ENCODE measurements at regions of chr16 and their contacts with region 1.

Region 1: DNA sequence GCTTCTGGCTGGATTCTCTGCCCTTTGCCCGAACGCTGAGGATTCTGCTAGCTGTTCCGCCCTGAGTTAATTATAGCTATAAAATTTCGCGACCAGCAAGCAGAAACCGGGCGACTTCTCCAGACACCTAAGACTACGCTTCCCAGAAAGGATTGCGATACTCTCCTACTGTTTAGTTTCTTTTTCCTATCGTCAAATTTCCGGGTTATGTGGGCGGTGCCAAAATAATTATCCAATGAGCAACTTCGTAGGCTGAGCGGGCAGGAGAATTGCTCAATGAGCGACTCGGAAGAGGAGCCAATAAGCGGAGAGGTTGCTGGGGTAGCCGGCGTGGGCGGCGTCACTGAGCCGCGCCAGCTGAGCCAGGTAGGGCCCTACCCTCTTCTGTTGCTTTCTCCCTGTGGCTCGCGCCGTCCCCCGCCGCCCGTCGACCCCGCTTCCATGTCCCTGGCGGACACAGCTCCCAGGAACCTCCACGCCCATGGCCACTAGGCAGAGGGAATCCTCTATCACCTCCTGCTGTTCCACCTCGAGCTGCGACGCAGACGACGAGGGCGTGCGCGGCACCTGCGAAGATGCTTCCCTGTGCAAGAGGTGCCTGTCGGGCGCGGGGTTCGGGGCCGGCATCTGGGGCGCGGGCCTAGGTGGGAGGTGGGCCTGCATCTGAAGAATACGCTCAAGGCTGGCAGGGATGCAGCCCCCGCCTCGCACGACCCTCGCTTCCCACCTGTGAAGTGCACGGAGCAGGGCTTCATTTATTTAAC is at the start of gene LCMT1:
- DNase-seq: peak; percentile 88 to 94
- ATAC-seq: peak; percentile 81 to 84 (median 84)
- H3K4me3 ChIP-seq: peak within 1 kb of the TSS; percentile 98
- H3K27ac ChIP-seq: peak within 1 kb of the TSS; percentile 86
- H3K4me1 ChIP-seq: peaks cover 31% of the 10 kb centered on the region
- H3K27me3 ChIP-seq: no peaks in the 10 kb centered on the region
- CTCF ChIP-seq: no peak
- total RNA-seq, gene LCMT1: 35.1 to 54.5 (median 38.0) TPM

Region 2: DNA sequence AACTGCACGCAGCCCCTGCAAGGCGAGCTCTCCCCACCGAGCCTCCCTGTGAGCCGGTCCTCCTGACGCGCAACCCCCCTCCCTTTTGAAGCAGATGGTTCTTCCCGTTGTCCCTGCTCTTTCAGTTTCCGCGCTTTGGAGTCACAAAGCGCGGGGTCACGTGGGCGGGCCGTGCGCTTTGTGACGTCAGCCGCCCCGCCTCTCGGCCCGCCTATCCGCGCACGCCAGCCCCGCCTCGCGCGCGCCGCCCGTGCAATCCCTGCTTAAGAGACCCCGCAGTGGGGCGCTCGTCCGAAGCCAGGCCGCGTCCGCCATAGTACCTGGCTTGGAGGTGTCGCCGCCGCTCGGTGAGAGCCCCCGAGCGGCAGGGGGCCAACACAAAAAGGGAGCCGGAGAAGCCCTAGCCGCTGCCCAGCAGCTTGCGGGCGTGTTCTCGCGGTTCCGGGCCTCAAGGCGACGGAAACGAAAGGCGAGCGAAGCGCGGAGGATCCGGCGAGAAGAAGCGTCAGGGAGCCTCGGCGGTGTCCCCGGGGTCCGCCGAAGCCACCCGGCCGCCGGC is 572.2 kb before region 1 on chr16 and contains the start of gene RBBP6:
- intact Hi-C with region 1: loop called in 1 of 2 experiments (anchors 10 kb)
- DNase-seq: peak; percentile 95 to 97
- ATAC-seq: peak; percentile 96 to 99 (median 98)
- H3K4me3 ChIP-seq: peak within 1 kb of the TSS; percentile 98
- H3K27ac ChIP-seq: peak within 1 kb of the TSS; percentile 100
- H3K4me1 ChIP-seq: peaks cover 12% of the 10 kb centered on the region
- H3K27me3 ChIP-seq: no peaks in the 10 kb centered on the region
- CTCF ChIP-seq: peak; percentile 27
- total RNA-seq, gene RBBP6: 21.8 to 30.7 (median 25.7) TPM

Region 3: DNA sequence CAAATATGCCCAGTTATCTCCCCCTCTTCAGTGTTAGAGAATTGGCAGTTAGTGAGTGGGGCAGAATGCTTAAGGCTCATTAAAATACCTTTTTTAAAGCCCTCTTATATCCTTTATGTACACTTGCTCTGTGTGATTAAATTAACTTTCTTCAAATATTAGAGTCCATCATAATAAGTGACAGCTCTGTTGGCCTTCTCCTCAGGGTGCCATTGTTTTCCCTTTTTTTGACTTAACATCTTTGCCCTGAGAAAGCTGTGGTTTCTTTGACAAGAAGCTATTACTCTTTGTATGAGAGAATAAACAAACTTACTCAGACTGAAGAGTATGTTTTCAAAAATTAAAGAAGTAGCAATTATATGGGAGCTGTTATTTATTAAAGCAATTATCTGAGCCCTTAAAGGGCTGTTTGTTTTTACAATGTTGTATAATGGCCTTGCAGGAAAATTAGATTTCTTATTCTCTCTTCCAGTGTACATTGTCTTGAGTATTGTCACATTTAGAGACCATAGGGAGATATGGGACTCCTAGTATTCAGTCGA is 558.8 kb before region 1 on chr16:
- intact Hi-C with region 1: loop called (anchors 10 kb)
- DNase-seq: no peak
- ATAC-seq: no peak
- H3K4me3 ChIP-seq: no peak overlapping the region
- H3K27ac ChIP-seq: no peak overlapping the region
- H3K4me1 ChIP-seq: no peaks in the 10 kb centered on the region
- H3K27me3 ChIP-seq: no peaks in the 10 kb centered on the region
- CTCF ChIP-seq: no peak

Region 4: DNA sequence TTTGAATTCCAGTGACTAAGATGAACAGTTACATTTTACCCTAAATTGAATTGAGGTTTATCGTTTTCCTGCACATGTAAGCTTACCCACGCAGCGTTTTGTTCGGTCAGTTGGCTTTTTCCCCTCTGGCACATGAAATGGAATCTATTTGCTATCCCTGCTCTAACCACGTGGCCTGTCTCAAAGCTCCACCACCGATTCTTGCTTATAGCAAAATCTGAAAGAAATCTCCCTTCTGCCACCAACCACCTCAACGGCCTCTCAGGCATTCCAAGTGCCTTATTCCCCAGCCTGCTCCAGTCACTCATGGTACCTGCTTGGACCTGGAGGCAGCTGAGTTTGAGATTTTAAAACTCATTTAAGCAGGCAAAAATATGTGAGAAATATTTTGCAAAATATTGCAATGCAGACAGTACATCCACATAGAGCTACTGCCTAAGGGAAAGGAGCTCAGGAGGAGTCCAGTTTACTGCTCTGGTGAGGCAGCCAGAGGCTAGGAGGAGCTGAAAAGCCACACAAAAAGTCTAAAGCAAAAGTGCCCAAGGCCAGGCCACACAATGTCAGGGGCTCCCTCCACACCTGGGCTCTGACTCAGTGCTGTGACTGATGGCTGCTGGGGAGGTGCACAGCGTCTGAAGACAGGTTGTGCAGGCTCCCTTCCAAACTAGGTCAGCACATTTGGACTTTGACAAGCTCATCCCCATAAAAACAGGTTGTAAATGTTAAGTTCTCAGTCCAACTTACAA is 122.8 kb before region 1 on chr16:
- intact Hi-C with region 1: loop called in 1 of 2 experiments (anchors 10 kb)
- DNase-seq: no peak
- ATAC-seq: peak; percentile 39 to 60 (median 48)
- H3K4me3 ChIP-seq: peak overlapping the region; percentile 32
- H3K27ac ChIP-seq: peak overlapping the region; percentile 56
- H3K4me1 ChIP-seq: peaks cover 94% of the 10 kb centered on the region
- H3K27me3 ChIP-seq: no peaks in the 10 kb centered on the region
- CTCF ChIP-seq: no peak

Region 5: DNA sequence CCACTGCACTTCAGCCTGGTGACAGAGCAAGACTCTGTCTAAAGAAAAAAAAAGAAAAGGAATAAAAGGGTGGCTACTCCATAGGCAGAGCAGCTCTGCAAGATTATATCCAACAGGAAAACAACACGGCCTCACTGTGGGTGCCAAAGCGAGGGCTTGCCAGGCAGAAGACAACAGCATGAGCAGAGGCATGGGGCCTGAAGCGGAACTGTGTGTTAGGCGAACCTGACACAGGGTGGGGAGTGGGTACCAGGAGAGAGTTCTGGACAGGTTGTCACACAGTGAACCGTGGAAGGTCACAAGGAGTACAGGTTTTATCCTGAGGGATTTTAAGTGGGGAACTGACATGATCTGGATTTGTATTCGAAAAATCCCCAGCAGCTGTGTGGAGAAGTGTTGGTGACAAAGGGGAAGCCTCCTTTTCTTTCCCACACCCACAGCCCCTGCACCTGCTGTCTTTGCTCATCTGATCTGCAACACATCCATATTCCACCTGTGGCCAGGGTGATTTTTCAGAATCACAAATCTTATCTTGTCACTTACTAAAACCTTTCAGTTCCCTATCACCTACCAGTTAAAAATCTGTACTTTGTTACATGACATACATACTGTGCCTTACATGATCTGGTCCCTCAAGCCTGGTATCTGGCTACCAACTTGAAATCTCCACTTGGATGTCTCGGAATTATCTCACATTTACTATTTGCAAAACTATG is 73.2 kb before region 1 on chr16:
- intact Hi-C with region 1: loop called in 1 of 2 experiments (anchors 5 kb)
- DNase-seq: no peak
- ATAC-seq: no peak
- H3K4me3 ChIP-seq: no peak overlapping the region
- H3K27ac ChIP-seq: no peak overlapping the region
- H3K4me1 ChIP-seq: no peaks in the 10 kb centered on the region
- H3K27me3 ChIP-seq: no peaks in the 10 kb centered on the region
- CTCF ChIP-seq: no peak

Region 6: DNA sequence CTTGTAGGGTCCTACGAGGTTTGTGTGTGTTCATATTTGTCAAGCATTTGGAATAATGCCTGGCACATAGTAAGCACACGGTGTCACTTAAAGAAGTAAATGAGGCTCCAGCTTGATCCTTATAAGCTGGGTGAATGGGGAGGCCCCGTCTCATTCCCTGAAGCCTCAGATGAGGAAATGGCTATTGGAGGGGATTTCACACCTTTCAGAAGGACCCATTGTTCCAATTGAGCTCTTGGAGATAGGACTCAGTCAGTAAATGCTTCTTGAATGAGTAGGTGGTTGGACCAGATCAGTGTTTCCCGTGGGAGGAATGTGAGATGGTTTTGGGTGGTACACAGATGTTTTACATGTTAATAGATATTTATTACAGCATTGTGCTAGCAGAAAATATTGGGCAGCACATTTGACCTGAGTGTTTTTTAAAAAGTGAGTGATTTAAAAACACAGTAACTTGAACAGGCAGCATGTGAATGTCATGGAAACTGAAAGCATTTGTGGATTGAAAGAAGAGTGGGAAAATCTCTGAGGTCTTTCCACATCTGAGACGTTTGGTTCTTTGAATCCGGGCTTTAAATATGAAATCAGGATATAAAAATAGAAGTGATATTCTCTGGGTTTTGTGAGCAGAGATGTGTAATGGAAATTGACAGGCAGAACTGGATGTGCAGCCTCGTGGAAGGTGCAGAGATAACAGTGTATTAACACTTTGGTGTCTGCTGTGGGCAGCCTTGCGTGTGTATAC is 60.0 kb before region 1 on chr16:
- intact Hi-C with region 1: loop called (anchors 2 to 5 kb)
- DNase-seq: no peak
- ATAC-seq: peak; percentile 35 to 51 (median 50)
- H3K4me3 ChIP-seq: peak overlapping the region; percentile 17
- H3K27ac ChIP-seq: peak overlapping the region; percentile 87
- H3K4me1 ChIP-seq: peaks cover 23% of the 10 kb centered on the region
- H3K27me3 ChIP-seq: no peaks in the 10 kb centered on the region
- CTCF ChIP-seq: no peak

Region 7: GRCh38 chr16:25224731-25225319 is 113.2 kb after region 1 on chr16:
- intact Hi-C with region 1: no loop called
- DNase-seq: no peak
- ATAC-seq: no peak
- H3K4me3 ChIP-seq: no peak overlapping the region
- H3K27ac ChIP-seq: no peak overlapping the region
- H3K4me1 ChIP-seq: no peaks in the 10 kb centered on the region
- H3K27me3 ChIP-seq: no peaks in the 10 kb centered on the region
- CTCF ChIP-seq: no peak

Region 8: DNA sequence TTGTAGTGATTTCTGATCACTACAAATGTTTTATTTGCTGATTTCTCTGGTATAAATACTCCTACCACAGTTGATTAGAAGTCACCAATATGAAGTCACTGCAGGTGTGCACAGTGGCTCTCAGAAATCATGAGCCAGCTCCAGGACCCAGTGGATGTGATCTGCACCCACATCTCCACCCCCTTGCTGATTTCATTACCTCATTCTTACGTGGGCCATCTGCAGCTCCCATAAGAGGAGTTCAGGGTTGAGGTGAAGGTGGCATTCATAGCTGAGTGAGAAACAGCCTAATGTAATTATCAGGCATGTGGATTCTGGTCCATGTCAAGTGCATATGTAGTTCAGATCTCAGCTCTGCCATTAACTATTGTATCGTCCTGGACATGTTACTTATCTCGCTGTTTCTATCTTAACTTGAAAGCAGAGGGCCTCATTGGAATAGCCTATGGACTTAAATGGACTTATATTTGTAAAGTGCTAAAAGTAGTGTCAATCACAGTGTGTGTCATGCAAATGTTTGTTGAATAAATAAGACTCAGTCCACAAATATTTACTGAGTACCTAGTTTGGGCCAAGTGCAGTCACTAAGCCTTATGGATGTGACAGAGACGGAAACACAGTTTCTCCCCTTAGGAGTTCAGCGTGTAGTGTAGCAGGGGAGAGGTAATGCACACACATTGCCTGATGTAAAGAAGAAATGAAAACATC is 186.7 kb after region 1 on chr16:
- intact Hi-C with region 1: no loop called
- DNase-seq: no peak
- ATAC-seq: no peak
- H3K4me3 ChIP-seq: no peak overlapping the region
- H3K27ac ChIP-seq: no peak overlapping the region
- H3K4me1 ChIP-seq: no peaks in the 10 kb centered on the region
- H3K27me3 ChIP-seq: no peaks in the 10 kb centered on the region
- CTCF ChIP-seq: no peak

Measured in psoas muscle (tissue), 8 donors.